B cell (primary cell): ENCODE measurements at regions of chr13 and their contacts with region 1.

Region 1: DNA sequence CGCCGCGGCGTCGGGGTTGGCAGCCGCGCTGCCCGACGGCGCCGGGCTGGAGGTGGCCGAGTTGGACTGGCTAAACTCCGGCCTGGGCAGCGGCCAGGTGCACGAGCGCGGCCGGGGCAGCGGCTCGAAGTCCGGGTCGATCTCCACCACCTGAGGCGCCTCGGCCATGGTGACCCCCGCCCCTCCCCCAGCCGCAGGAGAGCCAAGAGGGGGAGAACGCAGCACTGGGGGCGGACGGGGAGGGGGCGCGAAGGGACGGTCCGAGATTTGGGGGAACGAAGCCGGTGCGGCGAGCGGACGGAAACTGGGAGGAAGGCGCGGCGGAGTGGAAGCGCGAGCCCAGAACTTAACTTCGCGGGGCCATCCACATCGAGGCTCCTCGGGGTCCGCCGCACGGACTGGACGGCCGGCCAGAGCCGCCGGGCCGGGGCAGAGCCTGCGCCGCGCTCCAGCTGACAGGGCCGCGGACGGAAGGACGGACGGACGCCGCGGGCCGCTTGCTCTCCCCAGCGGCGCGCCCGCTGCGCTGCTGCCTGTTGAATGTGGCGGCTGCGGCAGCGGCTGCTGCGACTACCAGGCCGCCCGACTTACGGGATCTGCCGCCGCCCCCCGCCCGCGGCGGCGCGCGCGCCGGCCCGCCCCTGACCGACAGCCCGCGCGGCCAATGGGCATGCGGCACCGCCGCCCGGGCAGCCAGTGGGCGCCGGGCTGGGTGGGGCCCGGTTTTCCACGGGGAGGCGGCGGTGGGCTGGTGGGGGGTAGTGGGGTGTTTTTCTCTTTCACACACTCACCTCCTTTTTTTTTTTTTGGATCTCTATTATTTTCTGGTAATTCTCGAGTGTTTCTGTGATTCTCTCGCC is at the start of gene FOXO1:
- DNase-seq: peak; percentile 94
- ATAC-seq: peak; percentile 69
- H3K4me3 ChIP-seq: peak within 1 kb of the TSS; percentile 67 to 95 (median 84)
- H3K4me3 Mint-ChIP-seq: peak within 1 kb of the TSS; percentile 97
- H3K27ac ChIP-seq: peak within 1 kb of the TSS; percentile 77 to 91
- H3K27ac Mint-ChIP-seq: peak within 1 kb of the TSS; percentile 98
- H3K4me1 ChIP-seq: peaks cover 30 to 32% of the 10 kb centered on the region in 2 donors
- H3K4me1 Mint-ChIP-seq: peaks cover 38% of the 10 kb centered on the region
- H3K27me3 ChIP-seq: no peaks in the 10 kb centered on the region
- H3K27me3 Mint-ChIP-seq: no peaks in the 10 kb centered on the region
- CTCF ChIP-seq: no peak
- total RNA-seq, gene FOXO1: 77.9 and 83.1 TPM in 2 replicates

Region 2: DNA sequence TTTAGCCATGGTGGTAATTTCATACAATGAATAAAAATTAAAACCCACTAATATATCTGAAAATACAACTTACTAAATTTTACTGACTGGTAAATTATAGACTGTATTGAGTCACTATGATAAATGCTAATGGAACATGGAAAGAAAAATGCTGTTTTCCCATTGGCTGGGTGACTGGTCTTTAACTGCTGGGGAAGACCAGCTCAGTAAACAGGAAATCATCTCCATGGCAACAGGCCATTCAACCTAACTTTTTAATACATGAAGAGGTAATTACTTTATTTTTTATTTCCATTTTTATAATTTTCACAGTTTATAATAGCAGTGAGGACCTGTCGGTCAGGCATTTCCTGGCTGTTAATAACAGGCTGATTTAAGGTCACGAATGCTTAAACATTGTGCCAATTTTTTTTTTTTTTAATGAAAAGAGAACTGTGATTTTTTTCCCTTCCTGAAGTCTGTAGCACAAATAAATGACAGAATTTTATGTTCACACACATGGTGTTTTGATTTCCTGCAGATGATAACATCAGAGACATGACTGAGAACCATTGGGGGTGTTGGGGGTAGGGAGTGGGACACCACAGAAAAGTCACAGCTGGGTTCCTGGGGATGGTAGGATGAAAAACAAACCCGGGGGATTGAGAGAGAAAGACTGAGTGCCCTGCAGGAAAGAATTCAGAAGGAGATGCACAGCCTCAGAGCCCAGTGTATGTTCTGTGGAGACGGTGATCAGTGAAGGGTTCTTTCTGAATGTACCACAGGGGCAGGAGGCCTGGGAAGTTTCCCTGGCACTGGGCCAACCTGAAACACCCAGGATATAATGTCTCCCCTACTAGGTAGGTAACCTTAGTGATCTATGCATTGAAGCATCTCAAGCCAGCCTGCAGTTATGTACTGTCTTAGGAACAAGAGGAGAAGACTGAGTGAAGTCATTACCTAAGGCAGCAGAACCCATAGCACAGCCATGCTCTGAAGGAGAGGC is 713.7 kb before region 1 on chr13:
- CTCF ChIA-PET with region 1: interaction called, 6 read pairs
- POLR2A ChIA-PET with region 1: no interaction called
- intact Hi-C with region 1: loop called (anchors 5 kb)
- DNase-seq: peak; percentile 41
- ATAC-seq: peak; percentile 46
- H3K4me3 ChIP-seq: no peak overlapping the region
- H3K4me3 Mint-ChIP-seq: peak overlapping the region; percentile 33
- H3K27ac ChIP-seq: peak overlapping the region in 1 of 2 donors; percentile 71
- H3K27ac Mint-ChIP-seq: peak overlapping the region; percentile 54
- H3K4me1 ChIP-seq: peaks cover 21 to 28% of the 10 kb centered on the region in 2 donors
- H3K4me1 Mint-ChIP-seq: peaks cover 32% of the 10 kb centered on the region
- H3K27me3 ChIP-seq: no peaks in the 10 kb centered on the region
- H3K27me3 Mint-ChIP-seq: no peaks in the 10 kb centered on the region
- CTCF ChIP-seq: no peak

Region 3: GRCh38 chr13:40388617-40389016 is 277.7 kb before region 1 on chr13:
- CTCF ChIA-PET with region 1: no interaction called
- POLR2A ChIA-PET with region 1: no interaction called
- intact Hi-C with region 1: loop called (anchors 2 kb)
- DNase-seq: peak; percentile 80
- ATAC-seq: peak; percentile 94
- H3K4me3 ChIP-seq: peak overlapping the region in 4 of 5 experiments; percentile 9 to 66 (median 48)
- H3K4me3 Mint-ChIP-seq: peak overlapping the region; percentile 90
- H3K27ac ChIP-seq: peak overlapping the region; percentile 75 to 95
- H3K27ac Mint-ChIP-seq: peak overlapping the region; percentile 98
- H3K4me1 ChIP-seq: peaks cover 25 to 31% of the 10 kb centered on the region in 2 donors
- H3K4me1 Mint-ChIP-seq: peaks cover 26% of the 10 kb centered on the region
- H3K27me3 ChIP-seq: no peaks in the 10 kb centered on the region
- H3K27me3 Mint-ChIP-seq: no peaks in the 10 kb centered on the region
- CTCF ChIP-seq: no peak

Region 4: GRCh38 chr13:40445557-40445990 is 220.7 kb before region 1 on chr13:
- CTCF ChIA-PET with region 1: interaction called, 3 read pairs
- POLR2A ChIA-PET with region 1: interaction called, 12 read pairs
- intact Hi-C with region 1: loop called (anchors 1 kb)
- DNase-seq: peak; percentile 97
- ATAC-seq: peak; percentile 96
- H3K4me3 ChIP-seq: peak overlapping the region in 1 of 5 experiments; percentile 53
- H3K4me3 Mint-ChIP-seq: peak overlapping the region; percentile 50
- H3K27ac ChIP-seq: peak overlapping the region; percentile 93 to 97
- H3K27ac Mint-ChIP-seq: peak overlapping the region; percentile 96
- H3K4me1 ChIP-seq: peaks cover 57 to 62% of the 10 kb centered on the region in 2 donors
- H3K4me1 Mint-ChIP-seq: peaks cover 68% of the 10 kb centered on the region
- H3K27me3 ChIP-seq: no peaks in the 10 kb centered on the region
- H3K27me3 Mint-ChIP-seq: no peaks in the 10 kb centered on the region
- CTCF ChIP-seq: no peak

Region 5: DNA sequence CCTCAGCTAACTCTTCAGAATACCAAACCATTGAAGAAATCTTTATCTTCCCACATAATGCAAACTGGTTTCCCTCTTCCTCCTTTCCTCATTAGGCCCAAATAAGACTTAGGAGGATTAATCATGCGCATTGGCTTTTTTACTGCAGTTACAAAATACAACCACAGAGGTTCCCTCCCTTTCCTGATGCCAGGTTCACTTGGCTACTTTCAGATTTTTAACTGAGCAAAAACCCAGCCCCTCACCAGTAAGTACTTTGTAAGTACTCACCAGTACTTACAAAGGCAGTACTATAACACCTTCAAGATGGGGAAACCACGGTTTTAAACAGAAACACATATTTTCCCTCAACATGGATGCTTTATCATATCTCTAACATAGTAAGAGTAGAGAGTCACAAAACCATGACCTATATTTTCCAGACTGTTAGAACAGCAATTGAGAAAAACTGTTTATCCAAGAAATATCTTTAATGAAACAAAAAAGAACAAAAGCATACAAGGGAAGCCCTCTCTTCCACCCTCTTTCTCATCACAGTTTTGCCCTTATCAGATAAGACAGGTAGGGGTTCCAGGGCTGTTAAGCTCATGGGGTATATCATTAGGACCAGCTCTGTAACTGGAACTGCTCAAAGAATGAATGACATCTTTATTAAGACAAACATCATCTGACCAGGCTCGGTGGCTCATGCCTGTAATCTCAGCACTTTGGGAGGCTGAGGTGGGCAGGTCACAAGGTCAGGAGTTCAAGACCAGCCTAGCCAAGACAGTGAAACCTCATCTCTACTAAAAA is 12.6 kb before region 1 on chr13:
- CTCF ChIA-PET with region 1: interaction called, 4 read pairs
- POLR2A ChIA-PET with region 1: interaction called, 7 read pairs
- intact Hi-C with region 1: loop called (anchors 1 kb)
- DNase-seq: no peak
- ATAC-seq: peak; percentile 11
- H3K4me3 ChIP-seq: peak overlapping the region in 2 of 5 experiments; percentile 51 to 58
- H3K4me3 Mint-ChIP-seq: peak overlapping the region; percentile 86
- H3K27ac ChIP-seq: peak overlapping the region; percentile 62 to 73
- H3K27ac Mint-ChIP-seq: peak overlapping the region; percentile 90
- H3K4me1 ChIP-seq: peaks cover 79 to 87% of the 10 kb centered on the region in 2 donors
- H3K4me1 Mint-ChIP-seq: peaks cover 92% of the 10 kb centered on the region
- H3K27me3 ChIP-seq: no peaks in the 10 kb centered on the region
- H3K27me3 Mint-ChIP-seq: no peaks in the 10 kb centered on the region
- CTCF ChIP-seq: no peak

Region 6: GRCh38 chr13:40777166-40777808 is 111.0 kb after region 1 on chr13:
- CTCF ChIA-PET with region 1: interaction called, 12 read pairs
- POLR2A ChIA-PET with region 1: no interaction called
- intact Hi-C with region 1: no loop called
- DNase-seq: peak; percentile 82
- ATAC-seq: peak; percentile 83
- H3K4me3 ChIP-seq: peak overlapping the region; percentile 16 to 61 (median 47)
- H3K4me3 Mint-ChIP-seq: peak overlapping the region; percentile 69
- H3K27ac ChIP-seq: peak overlapping the region; percentile 14 to 60
- H3K27ac Mint-ChIP-seq: peak overlapping the region; percentile 86
- H3K4me1 ChIP-seq: peaks cover 11 to 29% of the 10 kb centered on the region in 2 donors
- H3K4me1 Mint-ChIP-seq: peaks cover 24% of the 10 kb centered on the region
- H3K27me3 ChIP-seq: no peaks in the 10 kb centered on the region
- H3K27me3 Mint-ChIP-seq: no peaks in the 10 kb centered on the region
- CTCF ChIP-seq: peak; percentile 93

Region 7: GRCh38 chr13:42271337-42272114 is 1605.3 kb after region 1 on chr13:
- CTCF ChIA-PET with region 1: no interaction called
- POLR2A ChIA-PET with region 1: no interaction called
- intact Hi-C with region 1: loop called (anchors 10 kb)
- DNase-seq: peak; percentile 99
- ATAC-seq: peak; percentile 81
- H3K4me3 ChIP-seq: peak overlapping the region; percentile 17 to 78 (median 72)
- H3K4me3 Mint-ChIP-seq: peak overlapping the region; percentile 97
- H3K27ac ChIP-seq: peak overlapping the region; percentile 91 to 96
- H3K27ac Mint-ChIP-seq: peak overlapping the region; percentile 98
- H3K4me1 ChIP-seq: peaks cover 41 to 48% of the 10 kb centered on the region in 2 donors
- H3K4me1 Mint-ChIP-seq: peaks cover 44% of the 10 kb centered on the region
- H3K27me3 ChIP-seq: no peaks in the 10 kb centered on the region
- H3K27me3 Mint-ChIP-seq: no peaks in the 10 kb centered on the region
- CTCF ChIP-seq: no peak